GM10248 (cell line): ENCODE measurements at regions of chr19 and their contacts with region 1.

Region 1: DNA sequence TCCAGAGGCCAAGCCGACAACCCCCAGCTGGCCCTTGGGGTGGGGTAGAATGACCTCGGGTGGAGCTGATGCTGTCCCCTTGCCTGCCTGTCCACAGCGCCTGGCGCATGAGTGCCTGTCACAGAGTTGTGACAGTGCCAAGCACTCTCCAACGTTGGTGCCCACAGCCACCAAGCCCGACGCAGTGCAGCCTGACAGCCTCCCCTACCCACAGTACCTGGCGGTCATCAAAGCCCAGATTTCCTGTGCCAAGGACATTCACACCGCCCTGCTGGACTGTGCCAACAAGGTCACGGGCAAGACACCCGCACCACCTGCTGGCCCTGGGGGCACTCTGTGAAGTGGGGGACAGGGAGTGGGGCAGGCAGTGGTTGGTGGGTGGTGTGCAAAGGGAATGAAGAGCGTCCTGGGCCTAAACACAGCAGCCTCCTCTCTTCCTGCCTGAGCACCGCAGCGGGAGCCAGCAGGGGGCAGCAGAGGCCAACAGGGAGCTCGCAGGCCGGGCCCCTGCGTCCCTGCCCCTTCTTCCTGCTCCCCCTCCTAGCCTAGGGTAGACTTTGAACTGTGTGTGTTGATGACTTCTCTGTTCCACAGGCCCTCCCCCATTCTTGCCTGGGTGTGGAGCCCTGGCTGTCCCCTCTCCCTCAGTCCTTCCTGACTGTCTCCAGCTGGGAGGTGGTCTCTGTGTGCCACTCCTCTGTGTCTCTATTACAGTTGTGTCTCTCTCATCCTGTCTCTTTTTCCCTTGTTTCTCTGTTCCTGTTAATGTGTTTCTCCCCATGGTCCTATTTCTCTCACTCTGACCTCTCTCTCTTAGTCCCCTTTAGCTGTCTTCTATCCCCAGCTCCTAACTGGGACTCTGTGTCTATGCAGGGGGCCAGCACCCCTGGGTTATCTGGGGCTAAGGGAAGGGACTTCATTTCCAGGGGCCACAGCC is 6.5 kb downstream of the MED29 start:
- DNase-seq: peak; percentile 90
- CTCF ChIP-seq: peak; percentile 99

Region 2: DNA sequence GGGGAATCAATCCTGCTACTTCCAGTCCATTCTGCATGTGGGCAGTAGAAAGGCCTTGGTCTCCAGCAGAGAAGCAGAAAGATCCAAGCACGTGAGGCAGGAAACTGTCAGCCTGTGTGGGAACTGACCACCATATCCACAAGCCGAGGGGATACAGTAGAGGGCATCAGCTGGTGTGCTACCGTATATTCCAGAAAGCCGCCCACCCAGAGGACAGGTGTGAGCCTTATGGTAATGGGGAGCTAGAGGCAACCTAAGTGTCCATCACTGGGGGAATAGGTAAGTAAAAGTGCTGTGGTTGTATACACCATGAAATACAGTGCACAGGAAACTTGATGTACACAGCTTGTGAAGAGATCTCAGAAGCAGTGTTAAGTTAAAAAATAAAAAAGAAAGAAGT is 104.2 kb before region 1 on chr19:
- CTCF ChIA-PET with region 1: no interaction called
- POLR2A ChIA-PET with region 1: no interaction called
- DNase-seq: no peak
- CTCF ChIP-seq: no peak

Region 3: GRCh38 chr19:39352381-39353255 is 45.0 kb before region 1 on chr19:
- CTCF ChIA-PET with region 1: interaction called, 12 read pairs
- POLR2A ChIA-PET with region 1: no interaction called
- DNase-seq: no peak
- CTCF ChIP-seq: no peak

Region 4: DNA sequence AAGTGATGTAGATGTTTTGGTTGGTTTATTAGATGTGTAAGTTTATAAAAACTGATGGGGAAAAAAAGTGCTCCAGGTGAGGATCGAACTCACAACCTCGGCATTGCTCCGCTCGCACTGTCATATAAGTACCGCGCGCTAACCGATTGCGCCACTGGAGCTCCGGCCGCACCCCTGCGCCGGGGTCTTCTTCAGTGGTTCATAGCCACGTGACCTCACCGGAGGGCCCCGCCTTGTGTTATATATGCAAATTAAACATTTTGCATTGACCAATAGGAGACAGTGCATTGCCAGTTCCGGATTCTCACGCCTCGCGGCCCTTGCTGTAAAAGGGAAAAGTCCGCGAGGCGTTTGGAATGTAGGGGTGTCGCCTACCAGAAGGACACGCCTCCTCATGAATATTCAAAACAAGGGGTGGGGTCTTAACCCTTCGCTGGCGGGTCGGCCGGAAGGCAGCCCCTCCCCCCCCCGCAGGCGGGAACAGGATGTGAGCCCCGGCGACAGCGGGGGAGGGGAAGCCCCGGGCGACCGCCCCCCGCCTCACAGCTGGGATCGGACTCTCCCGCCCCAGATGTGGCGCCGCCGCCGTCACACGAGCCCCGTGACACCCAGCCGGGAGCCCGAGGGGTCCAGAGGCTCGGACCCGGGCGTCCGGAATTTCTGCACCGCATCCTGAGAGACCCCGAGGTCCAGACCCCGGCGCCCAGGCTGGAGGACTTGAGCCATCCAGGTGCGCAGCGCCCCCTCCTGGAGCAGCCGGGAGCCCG is 14.7 kb after region 1 on chr19 and contains the start of gene PLEKHG2:
- CTCF ChIA-PET with region 1: interaction called, 103 read pairs
- POLR2A ChIA-PET with region 1: interaction called, 49 read pairs
- DNase-seq: peak; percentile 98
- CTCF ChIP-seq: peak; percentile 88